Transverse colon (tissue), 4 donors: ENCODE measurements at regions of chr9 and their contacts with region 1.

Region 1: DNA sequence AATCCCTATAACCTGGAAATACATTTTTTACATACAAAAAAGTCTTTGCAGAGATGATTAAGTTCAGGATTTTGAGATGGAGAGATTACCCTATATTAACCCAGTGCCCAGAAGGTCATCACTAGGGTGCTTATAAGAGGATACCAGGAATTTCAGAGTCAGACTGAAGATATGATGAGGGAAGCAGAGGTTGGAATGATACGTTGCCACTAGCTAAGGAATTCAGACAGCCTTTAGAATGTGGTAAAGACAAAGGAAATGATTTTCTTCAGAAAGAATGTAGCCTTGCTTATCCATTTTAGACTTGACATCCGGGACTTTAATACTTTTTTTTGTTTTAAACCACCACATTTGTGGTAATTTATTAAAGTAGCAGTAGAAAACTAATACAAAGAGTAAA is 2176.8 kb upstream of the C9orf72 start:
- DNase-seq: no peak
- H3K4me3 ChIP-seq: no peak overlapping the region
- H3K27ac ChIP-seq: no peak overlapping the region
- H3K4me1 ChIP-seq: no peaks in the 10 kb centered on the region
- H3K27me3 ChIP-seq: no peaks in the 10 kb centered on the region
- CTCF ChIP-seq: no peak
- EP300 ChIP-seq: no peak
- POLR2A ChIP-seq: no peak

Region 2: GRCh38 chr9:29668732-29669131 is 81.3 kb before region 1 on chr9:
- in situ Hi-C with region 1: loop called in 1 of 4 experiments (anchors 25 kb)
- intact Hi-C with region 1: no loop called
- DNase-seq: no peak
- H3K4me3 ChIP-seq: no peak overlapping the region
- H3K27ac ChIP-seq: no peak overlapping the region
- H3K4me1 ChIP-seq: no peaks in the 10 kb centered on the region
- H3K27me3 ChIP-seq: no peaks in the 10 kb centered on the region
- CTCF ChIP-seq: no peak
- EP300 ChIP-seq: no peak
- POLR2A ChIP-seq: no peak